ENCODE measurements at regions of chr1 and their contacts with region 1.

Region 1: DNA sequence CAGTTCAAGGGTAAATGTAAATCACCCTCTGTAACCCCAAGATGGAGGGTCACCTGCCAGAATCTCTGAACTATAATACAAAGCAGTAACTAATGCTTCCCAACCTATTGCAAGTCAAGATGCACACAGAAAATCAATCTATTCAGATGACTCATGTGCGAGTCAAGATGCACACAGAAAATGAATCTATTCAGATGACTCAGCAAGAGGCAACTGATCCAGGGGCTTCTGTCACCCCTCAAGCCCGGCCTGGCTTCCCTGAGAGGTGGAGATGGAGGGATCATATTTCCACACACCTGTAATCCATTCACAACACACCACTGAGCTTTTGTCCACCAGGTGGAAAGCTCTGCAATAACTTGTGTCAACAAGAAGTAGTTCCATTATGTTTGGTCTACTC is 17.4 kb upstream of the HIVEP3 start:
- DNase-seq: peak; percentile 63
- H3K4me3 Mint-ChIP-seq: no peak overlapping the region
- H3K27ac Mint-ChIP-seq: peak overlapping the region; percentile 66
- H3K4me1 Mint-ChIP-seq: peaks cover 9% of the 10 kb centered on the region
- H3K27me3 Mint-ChIP-seq: no peaks in the 10 kb centered on the region
- CTCF ChIP-seq: no peak

Region 2: GRCh38 chr1:41980827-41981653 is 44.9 kb after region 1 on chr1:
- CTCF ChIA-PET with region 1: no interaction called
- intact Hi-C with region 1: loop called (anchors 5 kb)
- DNase-seq: peak; percentile 14
- H3K4me3 Mint-ChIP-seq: peak overlapping the region; percentile 27
- H3K27ac Mint-ChIP-seq: peak overlapping the region; percentile 66
- H3K4me1 Mint-ChIP-seq: peaks cover 43% of the 10 kb centered on the region
- H3K27me3 Mint-ChIP-seq: no peaks in the 10 kb centered on the region
- CTCF ChIP-seq: no peak

Measured in Calu3 (cell line).